Right ventricle myocardium inferior (tissue), 1 donor: ENCODE measurements at regions of chr20 and their contacts with region 1.

Region 1: DNA sequence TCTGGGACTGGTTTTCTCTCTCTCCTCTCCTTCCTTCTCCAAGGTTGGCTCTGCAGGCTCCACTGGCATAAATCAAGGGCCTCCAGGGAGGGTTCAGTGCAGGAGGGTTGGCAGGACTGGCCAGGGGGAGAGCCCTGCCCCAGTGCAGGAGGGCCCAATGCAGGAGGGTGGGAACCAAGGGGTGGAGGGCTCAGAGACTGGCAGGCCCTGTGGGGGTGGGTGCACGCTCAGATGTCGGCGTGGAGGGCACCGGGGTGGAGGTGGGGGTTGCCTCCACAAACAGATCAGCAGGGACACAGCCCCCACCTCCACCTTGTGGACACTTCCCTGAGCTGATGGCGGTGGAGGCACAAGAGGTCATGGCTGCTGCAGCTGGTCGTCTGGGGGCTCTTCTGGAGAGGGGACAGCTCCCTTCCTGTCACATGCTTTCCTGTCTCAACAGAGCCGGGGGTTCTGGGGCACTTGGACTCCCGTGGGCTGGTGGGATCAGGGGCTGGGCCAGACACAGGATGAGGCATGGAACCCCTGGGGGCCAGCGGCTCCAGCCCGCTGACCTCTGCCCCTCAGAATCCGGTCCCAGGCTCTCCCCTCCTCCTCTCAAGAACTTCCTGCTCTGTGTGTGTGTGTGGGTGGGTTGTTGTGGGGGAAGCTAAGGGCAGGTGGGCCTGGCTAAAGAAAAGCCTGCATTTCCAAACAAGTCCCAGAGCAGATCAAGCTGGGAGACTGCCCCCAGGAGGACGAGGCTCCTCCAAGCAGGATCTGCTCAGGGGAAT is 2.7 kb upstream of the ABHD16B start:
- DNase-seq: no peak
- ATAC-seq: peak; percentile 30

Region 2: GRCh38 chr20:63846128-63846798 is 12.3 kb before region 1 on chr20:
- intact Hi-C with region 1: loop called (anchors 1 kb)
- DNase-seq: peak; percentile 84
- ATAC-seq: peak; percentile 83